Activated CD8-positive, alpha-beta memory T cell treated with anti-CD3 and anti-CD28 coated beads, Interleukin-2, amount 10 ng/mL, durations not matched to agents 7 days and 5 days (primary cell): ENCODE measurements at regions of chr1 and their contacts with region 1.

Region 1: DNA sequence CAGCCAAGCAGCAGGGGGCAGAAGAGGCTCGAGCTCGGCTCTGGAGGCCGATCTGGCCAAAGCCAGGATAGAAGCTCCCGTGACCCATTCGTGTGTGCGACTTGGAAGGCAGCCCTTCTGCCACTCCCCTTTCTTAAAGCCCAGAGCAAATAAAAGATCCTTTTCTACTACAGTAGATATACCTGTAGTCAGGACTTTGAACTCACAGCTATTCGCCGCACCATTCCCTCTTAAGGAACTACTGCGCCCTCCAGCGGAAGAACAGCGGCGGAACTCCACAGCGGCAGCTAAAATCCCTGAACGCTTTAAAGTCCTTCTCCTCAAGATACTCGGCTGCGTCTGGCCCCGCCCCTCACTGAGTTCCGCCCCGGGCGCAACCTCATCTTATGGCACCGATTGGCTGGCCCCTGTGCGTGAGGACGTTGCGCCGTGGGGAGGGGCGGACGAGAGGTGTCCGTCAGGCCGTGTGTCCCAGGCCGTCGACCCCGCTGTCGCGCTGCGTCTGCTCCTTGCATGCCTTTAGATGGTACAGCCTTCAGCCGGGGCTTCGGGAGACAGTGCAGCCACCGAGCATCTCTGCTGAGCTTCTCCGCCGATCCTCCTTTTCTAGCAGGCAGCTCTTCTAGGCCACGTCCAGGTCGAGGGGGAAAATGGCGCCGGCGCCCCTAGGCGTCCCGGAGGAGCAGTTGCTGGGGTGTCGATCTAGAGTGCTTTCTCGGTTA is at the start of gene LRIG2:
- DNase-seq: peak; percentile 99
- ATAC-seq: peak; percentile 98
- H3K4me3 Mint-ChIP-seq: peak within 1 kb of the TSS; percentile 100
- H3K27ac Mint-ChIP-seq: peak within 1 kb of the TSS; percentile 92
- H3K4me1 Mint-ChIP-seq: peaks cover 20% of the 10 kb centered on the region
- H3K27me3 Mint-ChIP-seq: no peaks in the 10 kb centered on the region
- total RNA-seq, gene LRIG2: 10.2 to 13.6 TPM

Region 2: GRCh38 chr1:112715264-112716053 is 357.5 kb before region 1 on chr1 and contains the start of gene PPM1J:
- CTCF ChIA-PET with region 1: interaction called, 33 read pairs
- DNase-seq: peak; percentile 99
- ATAC-seq: peak; percentile 93
- H3K4me3 Mint-ChIP-seq: peak within 1 kb of the TSS; percentile 80
- H3K27ac Mint-ChIP-seq: peak within 1 kb of the TSS; percentile 69
- H3K4me1 Mint-ChIP-seq: peaks cover 24% of the 10 kb centered on the region
- H3K27me3 Mint-ChIP-seq: peaks cover 40% of the 10 kb centered on the region
- total RNA-seq, gene PPM1J: 0.26 TPM in 1 of 2 experiments, not detected in the other

Region 3: GRCh38 chr1:112809253-112809684 is 263.6 kb before region 1 on chr1:
- CTCF ChIA-PET with region 1: interaction called, 13 read pairs
- DNase-seq: peak; percentile 75
- ATAC-seq: peak; percentile 80
- H3K4me3 Mint-ChIP-seq: no peak overlapping the region
- H3K27ac Mint-ChIP-seq: no peak overlapping the region
- H3K4me1 Mint-ChIP-seq: no peaks in the 10 kb centered on the region
- H3K27me3 Mint-ChIP-seq: peaks cover 27% of the 10 kb centered on the region

Region 4: GRCh38 chr1:112935461-112936289 is 137.2 kb before region 1 on chr1:
- CTCF ChIA-PET with region 1: interaction called, 15 read pairs
- DNase-seq: no peak
- ATAC-seq: no peak
- H3K4me3 Mint-ChIP-seq: peak overlapping the region; percentile 19
- H3K27ac Mint-ChIP-seq: peak overlapping the region; percentile 81
- H3K4me1 Mint-ChIP-seq: peaks cover 43% of the 10 kb centered on the region
- H3K27me3 Mint-ChIP-seq: no peaks in the 10 kb centered on the region

Region 5: DNA sequence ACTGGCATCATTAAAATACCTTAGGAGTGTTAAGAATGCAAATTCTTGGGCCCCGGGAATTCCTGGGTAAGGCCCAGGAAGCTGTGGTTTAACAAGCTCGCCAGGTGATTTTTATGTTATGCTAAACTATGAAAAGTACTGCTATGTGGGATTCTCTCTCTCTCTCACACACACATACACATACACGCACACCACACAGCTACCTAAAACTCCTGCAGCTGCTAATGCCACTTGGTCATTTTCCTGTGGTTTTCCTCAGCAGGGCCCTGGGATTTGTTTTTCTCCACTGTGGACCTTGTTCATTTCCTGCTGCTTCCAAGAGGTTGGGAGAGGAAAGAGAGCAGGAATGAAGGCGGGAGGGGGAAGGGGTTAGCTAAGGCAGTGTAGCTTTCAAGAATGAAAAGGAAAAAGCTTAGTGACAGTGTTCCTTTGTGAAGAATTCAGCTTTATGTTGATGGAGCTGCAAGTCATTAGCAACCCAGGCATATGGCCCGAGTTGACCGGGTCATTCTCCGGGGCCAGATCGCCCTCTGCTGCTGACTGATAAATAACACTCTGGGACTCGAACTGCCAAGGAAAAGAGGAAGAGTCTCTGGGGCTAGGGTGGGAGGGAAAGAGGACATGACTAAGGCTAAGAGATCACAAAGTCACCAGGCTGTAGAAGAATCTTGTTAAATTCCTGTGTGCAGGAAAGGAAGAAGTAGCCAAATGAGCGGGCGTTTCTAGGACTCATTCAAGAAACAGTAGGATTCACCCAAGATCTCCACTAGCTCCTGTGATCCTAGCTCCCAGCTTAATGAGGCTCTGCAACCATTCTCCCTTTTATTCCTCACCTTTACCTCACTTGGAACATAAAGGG is 30.4 kb before region 1 on chr1:
- CTCF ChIA-PET with region 1: interaction called, 27 read pairs
- DNase-seq: peak; percentile 56
- ATAC-seq: no peak
- H3K4me3 Mint-ChIP-seq: no peak overlapping the region
- H3K27ac Mint-ChIP-seq: peak overlapping the region; percentile 25
- H3K4me1 Mint-ChIP-seq: peaks cover 30% of the 10 kb centered on the region
- H3K27me3 Mint-ChIP-seq: no peaks in the 10 kb centered on the region

Region 6: DNA sequence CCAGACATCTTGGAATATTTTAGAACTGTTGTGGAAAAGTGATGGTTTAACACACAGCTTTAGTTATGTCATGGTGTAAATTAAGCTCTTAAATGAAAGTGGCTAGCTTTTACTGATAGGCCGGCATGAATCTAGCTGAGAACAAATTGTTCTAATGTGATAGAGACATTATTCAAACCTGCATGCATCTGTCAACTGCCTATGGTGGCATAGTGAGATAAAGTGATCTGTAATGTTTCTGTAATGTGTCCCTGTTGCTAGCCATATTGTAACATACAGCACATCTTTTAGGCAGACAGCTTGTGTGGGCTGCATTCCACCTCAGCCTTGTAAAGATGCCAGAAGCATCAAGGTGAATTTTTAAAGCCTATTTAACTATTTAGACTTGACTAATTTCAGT is 16.1 kb after region 1 on chr1:
- CTCF ChIA-PET with region 1: interaction called, 17 read pairs
- DNase-seq: no peak
- ATAC-seq: no peak
- H3K4me3 Mint-ChIP-seq: no peak overlapping the region
- H3K27ac Mint-ChIP-seq: no peak overlapping the region
- H3K4me1 Mint-ChIP-seq: peaks cover 15% of the 10 kb centered on the region
- H3K27me3 Mint-ChIP-seq: no peaks in the 10 kb centered on the region

Region 7: DNA sequence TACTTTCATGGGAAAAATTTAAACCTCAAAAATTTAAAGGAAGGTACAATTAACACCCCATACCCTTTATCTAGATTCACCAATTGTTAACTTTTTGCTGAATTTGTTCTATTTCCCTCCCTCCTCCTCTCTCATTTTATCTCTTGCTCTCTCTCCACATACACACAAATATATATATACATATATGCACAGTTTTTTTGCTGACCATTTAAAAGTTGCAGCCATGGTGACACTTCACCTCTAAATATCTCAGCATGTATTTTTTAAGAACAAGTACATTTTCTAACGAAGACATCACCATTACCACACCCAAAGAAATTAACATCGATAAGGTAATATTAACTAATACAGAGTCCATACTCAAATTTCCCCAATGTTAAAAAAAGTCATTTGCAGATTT is 34.0 kb after region 1 on chr1:
- CTCF ChIA-PET with region 1: no interaction called
- DNase-seq: no peak
- ATAC-seq: no peak
- H3K4me3 Mint-ChIP-seq: no peak overlapping the region
- H3K27ac Mint-ChIP-seq: no peak overlapping the region
- H3K4me1 Mint-ChIP-seq: no peaks in the 10 kb centered on the region
- H3K27me3 Mint-ChIP-seq: no peaks in the 10 kb centered on the region

Region 8: DNA sequence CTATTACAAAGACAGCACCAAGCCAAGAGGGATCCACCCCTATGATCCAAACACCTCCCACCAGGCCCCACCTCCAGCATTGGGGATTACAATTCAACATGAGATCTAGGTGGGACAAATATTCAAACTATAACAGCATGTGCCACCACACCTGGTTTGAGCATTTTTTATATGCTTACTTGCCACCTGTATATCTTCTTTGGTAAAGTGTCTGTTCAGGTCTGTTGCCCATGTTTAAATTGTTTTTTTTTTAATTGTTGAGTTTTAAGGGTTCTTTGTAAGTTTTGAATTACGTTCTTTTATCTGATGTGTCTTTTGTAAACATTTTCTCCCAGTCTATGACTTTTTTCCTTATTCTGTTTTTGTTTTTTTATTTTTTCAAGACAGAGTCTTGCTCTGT is 83.5 kb after region 1 on chr1:
- CTCF ChIA-PET with region 1: no interaction called
- DNase-seq: no peak
- ATAC-seq: no peak
- H3K4me3 Mint-ChIP-seq: no peak overlapping the region
- H3K27ac Mint-ChIP-seq: no peak overlapping the region
- H3K4me1 Mint-ChIP-seq: no peaks in the 10 kb centered on the region
- H3K27me3 Mint-ChIP-seq: peaks cover 10% of the 10 kb centered on the region